Calu3 (cell line): ENCODE measurements at regions of chr7 and their contacts with region 1.

Region 1: GRCh38 chr7:992709-993607 is 10.0 kb downstream of the CYP2W1 start:
- DNase-seq: peak; percentile 99
- H3K4me3 Mint-ChIP-seq: peak overlapping the region; percentile 36
- H3K27ac Mint-ChIP-seq: peak overlapping the region; percentile 87
- H3K4me1 Mint-ChIP-seq: peaks cover 13% of the 10 kb centered on the region
- H3K27me3 Mint-ChIP-seq: no peaks in the 10 kb centered on the region
- CTCF ChIP-seq: peak; percentile 100

Region 2: DNA sequence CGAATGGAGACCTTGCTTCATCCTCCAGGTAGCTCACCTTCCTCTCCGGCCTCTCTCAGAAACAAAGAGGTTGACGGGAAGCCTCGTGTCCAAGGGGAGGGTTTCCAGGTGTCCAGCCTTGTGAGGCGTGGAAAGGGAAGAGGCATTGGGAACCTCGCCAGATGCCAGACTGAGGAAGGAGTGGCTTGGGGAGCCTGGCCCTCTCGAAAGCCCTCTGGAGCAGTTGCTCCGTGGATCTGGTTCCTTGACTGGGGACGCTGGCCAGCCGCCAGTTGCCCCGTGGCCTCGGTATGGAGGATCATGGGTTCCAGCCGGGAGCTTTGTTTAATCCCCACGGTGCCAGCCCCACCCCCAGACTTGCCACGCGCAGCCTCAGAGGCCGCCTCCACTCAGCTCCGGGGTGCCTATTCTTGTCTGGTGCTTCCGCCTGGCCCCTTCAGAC is 191.0 kb before region 1 on chr7:
- CTCF ChIA-PET with region 1: no interaction called
- intact Hi-C with region 1: no loop called
- DNase-seq: no peak
- H3K4me3 Mint-ChIP-seq: no peak overlapping the region
- H3K27ac Mint-ChIP-seq: no peak overlapping the region
- H3K4me1 Mint-ChIP-seq: peaks cover 8% of the 10 kb centered on the region
- H3K27me3 Mint-ChIP-seq: no peaks in the 10 kb centered on the region
- CTCF ChIP-seq: no peak

Region 3: DNA sequence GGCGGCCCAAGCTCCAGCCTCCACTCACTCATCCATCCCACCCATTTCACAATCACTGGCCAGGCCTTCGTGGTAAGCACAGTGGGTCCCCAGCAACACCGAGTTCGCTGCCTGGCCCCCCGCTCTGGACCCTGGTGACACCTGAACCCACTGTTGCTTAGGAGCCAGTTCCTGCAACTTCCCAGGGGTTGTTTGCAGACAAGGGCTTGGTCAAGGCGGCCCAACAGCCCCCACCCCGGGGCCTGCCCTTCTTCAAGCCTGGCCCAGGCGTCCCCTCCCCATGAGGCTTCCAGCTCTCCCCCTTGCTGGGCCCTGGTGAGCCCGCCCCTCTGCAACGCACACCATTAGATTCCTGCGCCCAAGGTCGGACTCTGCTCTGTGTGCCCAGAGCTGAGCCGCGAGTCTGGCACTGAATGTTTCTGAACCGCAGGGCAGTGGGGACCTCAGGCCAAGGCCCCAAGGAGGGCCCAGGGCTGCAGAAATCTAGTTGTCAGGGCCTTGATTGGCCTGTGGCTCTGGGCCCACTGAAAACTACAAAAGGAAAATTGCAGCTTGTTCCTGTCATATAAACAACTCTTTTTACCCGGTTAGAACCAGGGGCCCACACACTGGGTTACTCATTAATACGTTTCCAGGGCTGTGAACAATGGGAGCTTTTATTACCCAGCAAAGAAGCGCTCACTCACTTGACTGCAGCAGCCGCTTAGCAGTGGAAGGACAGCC is 15.5 kb before region 1 on chr7:
- CTCF ChIA-PET with region 1: interaction called, 21 read pairs
- intact Hi-C with region 1: no loop called
- DNase-seq: peak; percentile 91
- H3K4me3 Mint-ChIP-seq: peak overlapping the region; percentile 93
- H3K27ac Mint-ChIP-seq: peak overlapping the region; percentile 80
- H3K4me1 Mint-ChIP-seq: peaks cover 29% of the 10 kb centered on the region
- H3K27me3 Mint-ChIP-seq: no peaks in the 10 kb centered on the region
- CTCF ChIP-seq: no peak

Region 4: GRCh38 chr7:1044191-1045068 is 51.5 kb after region 1 on chr7 and contains the start of gene GPR146:
- CTCF ChIA-PET with region 1: interaction called, 17 read pairs
- intact Hi-C with region 1: no loop called
- DNase-seq: peak; percentile 100
- H3K4me3 Mint-ChIP-seq: peak within 1 kb of the TSS; percentile 62
- H3K27ac Mint-ChIP-seq: peak within 1 kb of the TSS; percentile 81
- H3K4me1 Mint-ChIP-seq: peaks cover 42% of the 10 kb centered on the region
- H3K27me3 Mint-ChIP-seq: no peaks in the 10 kb centered on the region
- CTCF ChIP-seq: peak; percentile 66
- total RNA-seq, gene GPR146: 0.66 and 1.8 TPM in 2 replicates